Activated CD4-positive, alpha-beta memory T cell treated with anti-CD3 and anti-CD28 coated beads for 36 hours (primary cell): ENCODE measurements at regions of chr5 and their contacts with region 1.

Region 1: GRCh38 chr5:65102828-65103711 is 334.3 kb downstream of the CWC27 start:
- DNase-seq: peak; percentile 45
- H3K4me3 Mint-ChIP-seq: peak overlapping the region; percentile 70
- H3K27ac Mint-ChIP-seq: peak overlapping the region; percentile 62
- H3K4me1 Mint-ChIP-seq: peaks cover 31% of the 10 kb centered on the region
- H3K27me3 Mint-ChIP-seq: no peaks in the 10 kb centered on the region

Region 2: GRCh38 chr5:64811050-64811640 is 291.9 kb before region 1 on chr5:
- CTCF ChIA-PET with region 1: interaction called, 4 read pairs
- POLR2A ChIA-PET with region 1: no interaction called
- intact Hi-C with region 1: loop called (anchors 5 kb)
- DNase-seq: no peak
- H3K4me3 Mint-ChIP-seq: no peak overlapping the region
- H3K27ac Mint-ChIP-seq: no peak overlapping the region
- H3K4me1 Mint-ChIP-seq: peaks cover 6% of the 10 kb centered on the region
- H3K27me3 Mint-ChIP-seq: no peaks in the 10 kb centered on the region

Region 3: GRCh38 chr5:65172486-65173129 is 69.5 kb after region 1 on chr5:
- CTCF ChIA-PET with region 1: no interaction called
- POLR2A ChIA-PET with region 1: no interaction called
- intact Hi-C with region 1: loop called (anchors 2 kb)
- DNase-seq: peak; percentile 80
- H3K4me3 Mint-ChIP-seq: no peak overlapping the region
- H3K27ac Mint-ChIP-seq: no peak overlapping the region
- H3K4me1 Mint-ChIP-seq: peaks cover 6% of the 10 kb centered on the region
- H3K27me3 Mint-ChIP-seq: peaks cover 30% of the 10 kb centered on the region